Naive thymus-derived CD4-positive, alpha-beta T cell (primary cell): ENCODE measurements at regions of chrX and their contacts with region 1.

Region 1: DNA sequence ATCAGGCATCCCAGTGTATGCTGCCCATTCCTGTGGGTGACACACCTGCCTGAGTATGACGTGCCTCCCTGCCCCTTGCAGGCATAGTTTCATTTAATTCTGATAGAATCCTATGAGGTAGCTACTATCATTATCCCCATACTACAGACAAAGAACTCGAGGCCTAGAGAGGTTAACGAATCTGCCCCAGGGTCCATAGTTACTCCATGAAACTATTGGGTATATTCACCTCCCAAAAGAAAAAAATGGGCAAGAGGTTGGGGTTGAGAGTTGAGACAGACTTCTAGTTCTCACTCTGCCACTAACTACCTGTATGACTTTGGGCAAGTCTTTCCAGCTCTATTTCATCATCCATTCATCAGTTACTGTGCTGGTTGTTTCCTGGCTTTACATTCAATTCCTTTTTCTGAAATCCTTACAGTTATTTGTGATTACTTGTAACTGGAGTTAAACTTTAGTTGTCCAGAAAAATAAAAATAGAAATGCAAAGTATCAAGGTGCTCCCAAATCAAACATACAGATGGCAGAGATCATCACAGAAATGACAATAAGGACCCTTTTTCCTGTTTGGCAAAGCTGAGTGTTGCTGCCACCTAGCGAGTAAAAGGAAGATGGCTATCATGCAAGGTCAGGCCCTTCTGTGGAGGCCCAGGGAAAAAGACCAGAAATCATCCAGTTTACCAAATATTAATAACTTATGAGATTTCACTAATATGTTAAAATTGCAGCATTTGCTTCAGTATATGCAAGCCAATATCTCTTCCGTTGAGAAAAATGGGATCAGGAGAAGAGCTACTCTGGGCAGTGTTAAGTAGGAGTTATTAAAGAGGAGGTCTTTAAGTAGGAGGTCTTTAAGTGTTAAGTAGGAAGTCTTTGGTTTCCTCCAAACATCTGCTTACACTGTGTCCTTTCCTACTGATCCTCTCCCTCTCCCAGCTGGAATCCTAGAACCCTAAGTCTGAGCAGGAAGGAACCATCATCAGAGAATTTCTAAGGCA is 17.1 kb upstream of the MAP7D3 start:
- DNase-seq: peak in 7 of 9 donors; percentile 12 to 52 (median 43)
- ATAC-seq: peak; percentile 54
- H3K4me3 ChIP-seq: no peak overlapping the region
- H3K4me3 Mint-ChIP-seq: no peak overlapping the region
- H3K27ac ChIP-seq: no peak overlapping the region
- H3K27ac Mint-ChIP-seq: no peak overlapping the region
- H3K4me1 ChIP-seq: no peaks in the 10 kb centered on the region
- H3K4me1 Mint-ChIP-seq: peaks cover 0 to 11% (median 0%) of the 10 kb centered on the region in 7 donors
- H3K27me3 ChIP-seq: no peaks in the 10 kb centered on the region
- H3K27me3 Mint-ChIP-seq: no peaks in the 10 kb centered on the region

Region 2: GRCh38 chrX:136227948-136228838 is 40.2 kb before region 1 on chrX:
- CTCF ChIA-PET with region 1: no interaction called
- POLR2A ChIA-PET with region 1: interaction called, 4 read pairs
- intact Hi-C with region 1: loop called in 1 of 2 experiments (anchors 5 kb)
- DNase-seq: no peak
- ATAC-seq: no peak
- H3K4me3 ChIP-seq: no peak overlapping the region
- H3K4me3 Mint-ChIP-seq: peak overlapping the region in 1 of 10 donors; percentile 67
- H3K27ac ChIP-seq: no peak overlapping the region
- H3K27ac Mint-ChIP-seq: peak overlapping the region in 2 of 9 donors; percentile 57 to 76
- H3K4me1 ChIP-seq: no peaks in the 10 kb centered on the region
- H3K4me1 Mint-ChIP-seq: peaks cover 0 to 25% (median 4%) of the 10 kb centered on the region in 7 donors
- H3K27me3 ChIP-seq: no peaks in the 10 kb centered on the region
- H3K27me3 Mint-ChIP-seq: no peaks in the 10 kb centered on the region

Region 3: GRCh38 chrX:136251041-136251991 is 17.0 kb before region 1 on chrX and contains the start of gene MAP7D3:
- CTCF ChIA-PET with region 1: interaction called, 3 read pairs
- POLR2A ChIA-PET with region 1: no interaction called
- intact Hi-C with region 1: loop called (anchors 1 to 2 kb)
- DNase-seq: peak; percentile 54 to 74 (median 66)
- ATAC-seq: peak; percentile 96
- H3K4me3 ChIP-seq: peak within 1 kb of the TSS; percentile 58
- H3K4me3 Mint-ChIP-seq: peak within 1 kb of the TSS; percentile 84 to 98 (median 91)
- H3K27ac ChIP-seq: peak within 1 kb of the TSS; percentile 67
- H3K27ac Mint-ChIP-seq: peak within 1 kb of the TSS; percentile 82 to 97 (median 89)
- H3K4me1 ChIP-seq: no peaks in the 10 kb centered on the region
- H3K4me1 Mint-ChIP-seq: peaks cover 0 to 15% (median 8%) of the 10 kb centered on the region in 7 donors
- H3K27me3 ChIP-seq: no peaks in the 10 kb centered on the region
- H3K27me3 Mint-ChIP-seq: no peaks in the 10 kb centered on the region
- total RNA-seq, gene MAP7D3: 5.9 to 15.8 (median 7.7) TPM

Region 4: GRCh38 chrX:136577552-136577951 is 309.2 kb after region 1 on chrX:
- CTCF ChIA-PET with region 1: no interaction called
- POLR2A ChIA-PET with region 1: no interaction called
- intact Hi-C with region 1: loop called (anchors 2 to 10 kb)
- DNase-seq: peak; percentile 30 to 74 (median 62)
- ATAC-seq: peak; percentile 99
- H3K4me3 ChIP-seq: no peak overlapping the region
- H3K4me3 Mint-ChIP-seq: peak overlapping the region in 2 of 10 donors; percentile 20 to 63
- H3K27ac ChIP-seq: no peak overlapping the region
- H3K27ac Mint-ChIP-seq: peak overlapping the region in 8 of 9 donors; percentile 10 to 83 (median 67)
- H3K4me1 ChIP-seq: peaks cover 3 to 4% of the 10 kb centered on the region in 2 donors
- H3K4me1 Mint-ChIP-seq: peaks cover 0 to 22% (median 11%) of the 10 kb centered on the region in 7 donors
- H3K27me3 ChIP-seq: no peaks in the 10 kb centered on the region
- H3K27me3 Mint-ChIP-seq: no peaks in the 10 kb centered on the region